ENCODE measurements at regions of chr2 and their contacts with region 1.

Region 1: DNA sequence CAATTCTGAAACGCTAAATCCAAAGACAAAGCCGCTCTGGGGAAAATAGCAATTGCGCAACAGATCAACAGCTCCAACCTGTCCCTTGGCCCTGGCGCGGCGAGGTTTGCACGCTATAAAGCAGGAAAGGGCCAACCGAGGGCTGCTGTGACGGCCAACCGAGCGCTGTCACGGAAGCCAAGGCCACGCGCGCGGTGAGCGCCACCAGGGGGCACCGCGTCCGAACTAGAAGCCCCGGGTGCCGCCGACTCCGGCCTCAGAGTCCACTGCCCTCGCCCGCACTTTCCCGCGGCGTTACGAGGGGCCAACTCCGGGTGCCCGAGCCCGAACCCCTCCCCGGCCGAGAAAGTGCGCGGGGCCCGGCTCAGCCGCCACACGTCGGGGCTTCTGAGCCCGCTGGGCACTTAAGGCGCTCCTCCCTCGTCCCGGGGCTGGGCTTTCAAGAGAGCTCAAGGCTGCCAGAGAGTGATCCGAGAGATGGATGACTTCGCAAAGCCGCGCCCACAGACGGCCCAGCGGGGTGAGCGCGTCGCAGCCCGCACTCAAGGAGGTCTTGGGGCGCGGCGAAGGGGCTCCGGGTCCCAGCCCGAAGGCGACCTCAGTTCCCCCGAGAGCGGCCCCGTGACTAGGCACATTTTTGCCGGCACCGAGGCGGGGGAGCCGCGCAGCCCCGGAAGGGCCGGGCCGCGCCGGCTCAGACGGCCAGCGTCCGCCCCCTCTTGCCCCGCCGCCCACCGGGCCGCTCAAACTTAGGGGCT is 897 bp downstream of the NFE2L2 start:
- DNase-seq: peak; percentile 98
- ATAC-seq: peak; percentile 58
- H3K4me3 ChIP-seq: peak overlapping the region; percentile 81
- H3K27ac ChIP-seq: peak overlapping the region; percentile 95
- H3K4me1 ChIP-seq: peaks cover 28% of the 10 kb centered on the region
- H3K27me3 ChIP-seq: no peaks in the 10 kb centered on the region
- CTCF ChIP-seq: peak; percentile 84

Region 2: DNA sequence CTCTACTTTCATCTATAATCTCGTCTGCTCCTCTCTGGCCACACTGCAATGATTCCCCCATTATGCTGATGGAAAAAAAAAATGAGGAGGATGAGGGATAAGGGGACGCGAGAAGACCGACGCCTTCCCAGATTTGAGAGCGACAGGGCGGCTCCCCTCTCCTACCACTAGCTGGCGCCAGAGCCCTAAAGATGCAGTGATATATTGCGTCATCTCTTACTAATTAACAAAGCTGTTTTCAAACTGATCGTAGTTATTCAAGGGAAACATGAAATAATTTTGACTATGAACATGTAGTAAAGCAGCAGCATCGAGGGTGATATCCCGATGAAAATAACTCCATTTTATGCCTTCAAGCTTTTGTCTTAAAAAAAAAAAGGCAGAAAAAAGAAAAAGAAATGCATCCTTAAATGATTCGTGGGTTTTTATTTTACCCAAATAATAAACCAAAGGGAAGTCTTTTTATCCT is 99.0 kb before region 1 on chr2:
- CTCF ChIA-PET with region 1: interaction called, 16 read pairs
- POLR2A ChIA-PET with region 1: interaction called, 5 read pairs
- intact Hi-C with region 1: loop called (anchors 1 kb)
- DNase-seq: peak; percentile 83
- ATAC-seq: peak; percentile 51
- H3K4me3 ChIP-seq: peak overlapping the region; percentile 63
- H3K27ac ChIP-seq: no peak overlapping the region
- H3K4me1 ChIP-seq: peaks cover 40% of the 10 kb centered on the region
- H3K27me3 ChIP-seq: no peaks in the 10 kb centered on the region
- CTCF ChIP-seq: peak; percentile 99

Region 3: GRCh38 chr2:177229448-177230242 is 34.0 kb before region 1 on chr2:
- CTCF ChIA-PET with region 1: no interaction called
- POLR2A ChIA-PET with region 1: interaction called, 9 read pairs
- intact Hi-C with region 1: loop called (anchors 5 kb)
- DNase-seq: no peak
- ATAC-seq: no peak; the same call in 1 of the 2 replicates
- H3K4me3 ChIP-seq: no peak overlapping the region
- H3K27ac ChIP-seq: no peak overlapping the region
- H3K4me1 ChIP-seq: no peaks in the 10 kb centered on the region
- H3K27me3 ChIP-seq: no peaks in the 10 kb centered on the region
- CTCF ChIP-seq: no peak

Region 4: DNA sequence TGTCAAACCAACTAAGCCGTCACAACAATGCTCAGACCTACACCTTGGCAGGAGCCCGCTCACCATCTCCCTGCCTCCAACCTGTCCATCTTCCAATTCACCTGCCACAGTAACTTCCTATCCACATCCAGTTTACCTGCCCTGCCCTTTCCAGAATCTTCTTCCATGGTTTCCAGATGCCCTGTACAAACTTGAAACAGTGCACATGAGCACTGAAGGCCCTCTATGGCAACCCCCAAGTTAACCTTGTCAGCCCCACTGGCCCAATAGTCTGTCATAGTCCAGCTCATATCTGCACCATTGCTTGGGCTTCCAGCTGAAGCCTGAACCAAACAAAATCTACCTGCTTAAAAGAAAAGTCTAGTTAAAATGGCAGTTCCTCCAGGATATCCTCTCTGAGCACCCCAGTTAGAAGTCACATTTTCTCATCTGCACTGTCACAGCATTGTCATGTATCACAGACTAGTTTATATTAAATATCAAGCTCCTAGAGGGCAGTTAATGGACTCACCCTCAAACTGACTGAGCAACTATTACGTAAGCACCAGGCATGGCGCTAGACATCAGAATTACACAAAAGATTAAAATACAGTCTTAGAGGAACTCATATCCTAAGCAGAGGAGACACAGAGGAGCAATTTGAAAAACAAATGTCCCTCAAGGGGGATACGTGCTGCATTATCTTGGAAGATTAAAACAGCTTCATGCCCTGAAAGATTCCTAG is 10.7 kb before region 1 on chr2:
- CTCF ChIA-PET with region 1: no interaction called
- POLR2A ChIA-PET with region 1: no interaction called
- intact Hi-C with region 1: loop called (anchors 1 kb)
- DNase-seq: no peak
- ATAC-seq: peak; percentile 17
- H3K4me3 ChIP-seq: no peak overlapping the region
- H3K27ac ChIP-seq: no peak overlapping the region
- H3K4me1 ChIP-seq: peaks cover 15% of the 10 kb centered on the region
- H3K27me3 ChIP-seq: no peaks in the 10 kb centered on the region
- CTCF ChIP-seq: no peak

Region 5: DNA sequence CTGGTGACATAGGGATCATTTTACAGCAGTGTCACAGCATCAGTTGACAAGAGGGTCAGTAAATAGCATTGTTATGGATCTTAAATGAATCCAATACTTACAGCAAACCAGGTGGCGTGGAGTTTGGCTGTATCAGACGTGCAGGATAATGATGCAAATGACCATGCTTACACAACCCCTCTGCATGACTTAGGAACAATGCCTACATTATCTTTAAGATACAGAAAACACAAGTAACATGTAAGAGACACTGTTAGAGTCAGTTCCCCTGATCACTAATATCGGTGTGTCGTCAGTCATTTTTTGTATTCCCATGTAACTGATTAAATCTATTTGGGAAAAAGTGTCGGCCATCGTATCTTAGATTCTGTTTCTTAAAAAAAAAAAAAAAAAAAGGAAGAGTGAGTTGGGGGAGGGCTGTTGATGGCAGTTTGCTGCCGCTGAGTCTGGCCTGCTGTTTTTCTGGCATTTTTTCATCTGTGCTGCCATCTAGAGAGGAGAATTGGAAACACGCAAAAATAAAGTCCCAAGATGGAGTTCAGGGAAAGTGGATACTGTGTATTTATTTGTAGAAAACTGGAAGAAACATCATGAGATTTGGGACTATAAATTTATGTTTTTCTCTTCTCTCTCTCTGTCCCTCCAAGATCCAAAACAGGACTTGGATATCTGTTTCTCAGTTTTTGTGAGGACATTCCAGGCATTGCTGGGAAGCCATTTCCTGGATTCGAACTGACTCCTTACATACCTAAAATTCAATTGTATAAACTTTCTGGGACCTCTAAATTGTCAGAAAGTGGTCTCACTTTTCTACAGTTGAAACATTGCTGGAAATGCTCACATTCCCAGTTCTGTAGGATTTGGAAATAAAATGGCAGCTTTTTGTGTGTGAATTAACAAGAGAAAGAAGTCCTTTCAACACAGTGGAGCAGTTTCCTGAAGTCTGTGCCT is 68.7 kb after region 1 on chr2:
- CTCF ChIA-PET with region 1: no interaction called
- POLR2A ChIA-PET with region 1: no interaction called
- intact Hi-C with region 1: loop called (anchors 1 kb)
- DNase-seq: peak; percentile 75
- ATAC-seq: peak; percentile 70
- H3K4me3 ChIP-seq: no peak overlapping the region
- H3K27ac ChIP-seq: no peak overlapping the region
- H3K4me1 ChIP-seq: peaks cover 10% of the 10 kb centered on the region
- H3K27me3 ChIP-seq: no peaks in the 10 kb centered on the region
- CTCF ChIP-seq: peak; percentile 76

Region 6: DNA sequence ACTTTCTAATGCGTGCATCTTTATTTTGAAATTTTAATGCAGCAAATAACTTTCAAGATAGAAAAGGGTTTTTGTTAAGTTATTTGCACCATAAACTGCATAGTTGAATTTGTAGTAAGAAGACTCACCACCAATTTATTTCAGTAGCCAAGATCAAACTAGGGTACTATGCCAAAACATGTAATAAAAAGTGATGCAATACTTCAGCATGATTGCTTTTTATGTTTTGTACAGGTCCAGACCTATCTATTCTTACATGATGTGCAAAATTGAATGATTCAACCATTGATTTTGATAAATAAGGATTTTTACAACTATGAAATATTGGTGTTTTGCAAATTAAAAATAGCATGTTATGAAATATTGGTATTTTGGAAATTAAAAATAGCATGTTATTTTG is 155.6 kb after region 1 on chr2:
- CTCF ChIA-PET with region 1: interaction called, 3 read pairs
- POLR2A ChIA-PET with region 1: interaction called, 3 read pairs
- intact Hi-C with region 1: loop called (anchors 5 kb)
- DNase-seq: peak; percentile 28
- ATAC-seq: no peak
- H3K4me3 ChIP-seq: no peak overlapping the region
- H3K27ac ChIP-seq: no peak overlapping the region
- H3K4me1 ChIP-seq: peaks cover 9% of the 10 kb centered on the region; the same call in 1 of the 2 replicates
- H3K27me3 ChIP-seq: no peaks in the 10 kb centered on the region
- CTCF ChIP-seq: no peak

Measured in PC-3 (cell line).